ENCODE measurements at regions of chr17 and their contacts with region 1.

Region 1: DNA sequence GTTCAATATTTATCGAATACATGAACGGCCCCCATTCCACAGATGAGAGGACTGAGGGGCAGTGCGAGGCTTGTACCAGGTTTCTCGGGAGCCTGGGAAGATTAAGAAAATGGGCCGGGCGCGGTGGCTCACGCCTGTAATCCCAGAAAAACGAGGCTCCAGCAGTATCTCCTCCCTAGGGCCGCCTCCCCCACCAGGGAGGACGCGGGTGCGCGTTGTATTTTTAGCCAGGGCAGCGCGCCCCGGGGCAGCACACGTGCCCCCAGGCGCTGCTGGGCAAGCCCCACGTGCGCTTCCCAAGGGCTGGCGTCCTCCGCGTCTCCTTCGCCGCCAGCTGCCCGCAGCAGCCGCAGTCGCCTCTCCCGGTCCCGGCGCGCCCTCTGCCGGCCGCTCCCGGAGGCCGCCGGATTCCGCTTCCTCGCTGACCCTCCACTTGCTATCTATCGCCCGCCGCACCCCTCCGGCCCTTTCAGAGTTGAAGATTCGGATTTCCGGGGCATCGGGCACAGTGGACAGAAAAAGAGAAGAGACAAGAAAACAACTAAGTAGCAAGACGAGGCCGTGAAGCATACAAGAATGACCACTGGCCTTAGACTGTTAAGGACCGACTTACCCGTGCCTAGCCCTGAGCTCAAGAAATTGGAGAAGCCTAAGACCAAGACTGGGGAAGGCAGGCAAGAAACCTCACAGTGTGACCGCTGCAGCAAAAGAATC is 1.9 kb upstream of the YBX2 start:
- DNase-seq: peak; percentile 92

Region 2: DNA sequence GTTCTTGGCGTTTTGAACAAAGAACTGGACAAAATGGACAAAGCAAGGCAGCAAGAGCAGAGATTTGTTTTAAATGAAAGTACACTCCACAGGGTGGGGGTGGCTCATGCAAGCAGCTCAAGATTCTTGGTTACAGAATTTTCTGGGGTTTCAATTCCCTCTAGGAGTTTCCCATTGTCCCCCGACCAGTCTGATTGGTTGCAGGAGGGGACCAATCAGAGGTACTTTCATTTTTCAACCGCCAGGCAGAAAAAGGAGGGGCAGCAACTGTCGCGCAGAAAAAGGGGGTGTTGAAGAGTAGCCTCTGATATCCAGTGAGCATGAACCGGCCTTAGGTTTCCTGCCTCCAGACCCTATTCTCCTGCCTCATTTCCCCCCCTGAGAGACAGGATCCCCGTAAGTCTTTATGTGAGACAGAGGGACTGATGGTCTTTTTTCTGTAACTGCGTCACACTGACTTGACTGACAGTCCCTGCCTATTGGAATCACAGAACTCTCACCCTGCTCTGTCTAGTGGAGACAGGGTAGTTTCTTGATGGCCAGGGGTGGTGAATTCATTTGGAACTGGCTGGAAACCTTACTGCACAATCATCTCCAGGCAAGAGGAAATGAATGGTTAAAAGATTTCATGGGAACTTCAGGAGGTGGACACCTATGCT is 359.8 kb before region 1 on chr17:
- intact Hi-C with region 1: no loop called
- DNase-seq: no peak

Region 3: GRCh38 chr17:7045909-7046724 is 250.2 kb before region 1 on chr17:
- intact Hi-C with region 1: loop called (anchors 5 kb)
- DNase-seq: no peak

Region 4: GRCh38 chr17:7280519-7281429 is 15.6 kb before region 1 on chr17:
- intact Hi-C with region 1: loop called (anchors 1 kb)
- DNase-seq: peak; percentile 89

Measured in cardiac septum (tissue), 1 donor.